ENCODE measurements at regions of chr12 and their contacts with region 1.

Region 1: GRCh38 chr12:111396726-111397445 is 8.8 kb upstream of the SH2B3 start:
- DNase-seq: no peak
- ATAC-seq: peak; percentile 86
- H3K4me3 ChIP-seq: peak overlapping the region; percentile 7; the same call in 1 of the 2 replicates
- H3K27ac ChIP-seq: peak overlapping the region; percentile 61
- H3K4me1 ChIP-seq: peaks cover 38% of the 10 kb centered on the region
- H3K27me3 ChIP-seq: no peaks in the 10 kb centered on the region
- CTCF ChIP-seq: peak; percentile 97 to 99 (median 99)
- EP300 ChIP-seq: no peak
- POLR2A ChIP-seq: no peak
- RAD21 ChIP-seq: peak; percentile 92

Region 2: GRCh38 chr12:111320233-111321050 is 76.4 kb before region 1 on chr12:
- CTCF ChIA-PET with region 1: no interaction called
- POLR2A ChIA-PET with region 1: no interaction called
- RAD21 ChIA-PET with region 1: no interaction called
- SMC1A ChIA-PET with region 1: no interaction called
- in situ Hi-C with region 1: no loop called
- intact Hi-C with region 1: no loop called
- DNase-seq: no peak
- ATAC-seq: no peak
- H3K4me3 ChIP-seq: no peak overlapping the region
- H3K27ac ChIP-seq: no peak overlapping the region
- H3K4me1 ChIP-seq: no peaks in the 10 kb centered on the region
- H3K27me3 ChIP-seq: no peaks in the 10 kb centered on the region
- CTCF ChIP-seq: no peak
- EP300 ChIP-seq: no peak
- POLR2A ChIP-seq: no peak
- RAD21 ChIP-seq: no peak

Region 3: GRCh38 chr12:111330800-111331752 is 65.8 kb before region 1 on chr12:
- CTCF ChIA-PET with region 1: interaction called, 9 read pairs
- POLR2A ChIA-PET with region 1: no interaction called
- RAD21 ChIA-PET with region 1: interaction called, 4 read pairs
- SMC1A ChIA-PET with region 1: interaction called, 7 read pairs
- in situ Hi-C with region 1: no loop called
- intact Hi-C with region 1: loop called (anchors 2 kb)
- DNase-seq: no peak
- ATAC-seq: peak; percentile 69
- H3K4me3 ChIP-seq: no peak overlapping the region
- H3K27ac ChIP-seq: no peak overlapping the region
- H3K4me1 ChIP-seq: no peaks in the 10 kb centered on the region
- H3K27me3 ChIP-seq: no peaks in the 10 kb centered on the region; a peak in 2 of 4 replicates
- CTCF ChIP-seq: peak; percentile 50 to 62 (median 53)
- EP300 ChIP-seq: no peak
- POLR2A ChIP-seq: no peak
- RAD21 ChIP-seq: peak; percentile 54

Region 4: GRCh38 chr12:111444925-111445725 is 48.2 kb after region 1 on chr12:
- CTCF ChIA-PET with region 1: interaction called, 1,117 read pairs
- POLR2A ChIA-PET with region 1: interaction called, 22 read pairs
- RAD21 ChIA-PET with region 1: interaction called, 804 read pairs
- SMC1A ChIA-PET with region 1: interaction called, 605 read pairs
- in situ Hi-C with region 1: loop called (anchors 5 kb)
- intact Hi-C with region 1: loop called (anchors 1 kb)
- DNase-seq: peak; percentile 94
- ATAC-seq: peak; percentile 91
- H3K4me3 ChIP-seq: peak overlapping the region; percentile 59; the same call in 1 of the 2 replicates
- H3K27ac ChIP-seq: peak overlapping the region; percentile 95
- H3K4me1 ChIP-seq: peaks cover 88% of the 10 kb centered on the region
- H3K27me3 ChIP-seq: no peaks in the 10 kb centered on the region
- CTCF ChIP-seq: peak in 1 of 3 experiments; percentile 5; a peak in 1 of 6 replicates
- EP300 ChIP-seq: peak; percentile 92 to 94
- POLR2A ChIP-seq: peak; percentile 74
- RAD21 ChIP-seq: peak; percentile 13; the same call in 1 of the 2 replicates

Region 5: GRCh38 chr12:111482462-111482861 is 85.6 kb after region 1 on chr12:
- CTCF ChIA-PET with region 1: interaction called, 36 read pairs
- POLR2A ChIA-PET with region 1: no interaction called
- RAD21 ChIA-PET with region 1: interaction called, 5 read pairs
- SMC1A ChIA-PET with region 1: interaction called, 7 read pairs
- in situ Hi-C with region 1: no loop called
- intact Hi-C with region 1: loop called (anchors 1 kb)
- DNase-seq: no peak
- ATAC-seq: no peak
- H3K4me3 ChIP-seq: no peak overlapping the region
- H3K27ac ChIP-seq: no peak overlapping the region
- H3K4me1 ChIP-seq: no peaks in the 10 kb centered on the region
- H3K27me3 ChIP-seq: no peaks in the 10 kb centered on the region
- CTCF ChIP-seq: peak; percentile 19 to 35 (median 29); a peak in 2 of 6 replicates
- EP300 ChIP-seq: no peak
- POLR2A ChIP-seq: no peak
- RAD21 ChIP-seq: peak; percentile 34

Region 6: DNA sequence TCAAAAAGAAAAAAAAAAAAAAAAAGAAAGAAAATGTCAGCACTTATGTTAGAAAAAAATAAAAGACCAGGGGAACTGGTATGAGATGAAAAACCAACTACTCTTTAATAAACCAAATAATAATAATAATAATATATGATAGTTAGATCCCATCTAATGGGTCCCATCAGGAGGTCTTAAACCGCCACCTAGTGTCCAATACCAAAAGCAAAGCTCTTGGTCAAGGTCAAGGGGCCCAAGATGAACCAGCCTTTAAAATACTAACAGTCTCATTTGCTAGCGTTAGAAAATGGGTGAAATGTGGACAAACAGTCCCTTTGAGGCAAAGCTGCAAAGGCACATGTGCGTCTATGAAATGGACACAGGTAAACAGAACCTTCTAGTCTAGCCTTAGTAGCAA is 276.6 kb after region 1 on chr12:
- CTCF ChIA-PET with region 1: interaction called, 6 read pairs
- POLR2A ChIA-PET with region 1: no interaction called
- RAD21 ChIA-PET with region 1: interaction called, 13 read pairs
- SMC1A ChIA-PET with region 1: interaction called, 3 read pairs
- in situ Hi-C with region 1: no loop called
- intact Hi-C with region 1: no loop called
- DNase-seq: no peak
- ATAC-seq: peak; percentile 52; the same call in 1 of the 3 replicates
- H3K4me3 ChIP-seq: no peak overlapping the region
- H3K27ac ChIP-seq: no peak overlapping the region
- H3K4me1 ChIP-seq: no peaks in the 10 kb centered on the region
- H3K27me3 ChIP-seq: no peaks in the 10 kb centered on the region
- CTCF ChIP-seq: peak; percentile 27 to 51 (median 40); a peak in 4 of 6 replicates
- EP300 ChIP-seq: no peak
- POLR2A ChIP-seq: no peak
- RAD21 ChIP-seq: peak; percentile 67

Region 7: DNA sequence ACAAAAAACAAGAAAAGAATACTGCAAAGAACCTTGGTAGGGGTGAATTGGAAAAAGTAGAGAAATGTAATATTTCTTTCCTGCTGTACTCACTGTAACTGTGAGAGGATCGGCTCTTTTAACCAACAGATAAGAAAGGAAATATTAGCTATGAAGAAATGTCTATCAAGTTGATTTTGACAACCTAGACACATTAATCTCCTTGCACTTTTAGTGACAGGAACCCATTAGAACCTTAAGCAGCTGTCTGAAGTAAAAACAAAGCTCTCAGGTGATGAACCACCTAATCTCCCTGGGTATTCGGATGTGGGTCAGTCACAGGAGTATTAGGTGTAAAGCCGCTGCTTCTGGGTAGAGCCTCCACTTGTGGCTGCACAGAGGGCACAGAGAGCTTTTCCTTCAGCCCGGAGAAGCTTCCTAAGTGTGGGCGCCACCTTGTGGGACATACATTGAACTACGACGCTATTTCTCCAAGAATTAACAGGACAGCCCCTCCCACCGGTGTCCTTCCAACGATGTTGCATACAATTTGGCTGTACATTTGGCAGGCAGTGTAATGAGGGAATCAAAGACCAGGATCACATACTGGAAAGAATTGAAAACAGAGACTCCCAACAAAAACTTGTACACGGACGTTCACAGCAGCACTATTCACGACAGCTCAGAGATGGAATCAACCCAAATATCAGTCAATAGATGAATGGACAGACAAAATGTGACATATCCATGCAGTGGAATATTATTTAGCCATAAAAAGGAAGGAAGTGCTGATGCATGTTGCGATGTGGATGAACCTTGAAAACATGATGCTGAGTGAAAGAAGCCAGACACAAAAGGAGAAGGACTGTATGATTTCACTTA is 416.2 kb after region 1 on chr12:
- CTCF ChIA-PET with region 1: interaction called, 14 read pairs
- POLR2A ChIA-PET with region 1: no interaction called
- RAD21 ChIA-PET with region 1: interaction called, 3 read pairs
- SMC1A ChIA-PET with region 1: interaction called, 5 read pairs
- in situ Hi-C with region 1: no loop called
- intact Hi-C with region 1: loop called (anchors 2 kb)
- DNase-seq: peak; percentile 44
- ATAC-seq: peak; percentile 99
- H3K4me3 ChIP-seq: no peak overlapping the region
- H3K27ac ChIP-seq: no peak overlapping the region
- H3K4me1 ChIP-seq: peaks cover 3% of the 10 kb centered on the region; the same call in 1 of the 2 replicates
- H3K27me3 ChIP-seq: no peaks in the 10 kb centered on the region
- CTCF ChIP-seq: peak; percentile 80 to 89 (median 80)
- EP300 ChIP-seq: no peak
- POLR2A ChIP-seq: no peak
- RAD21 ChIP-seq: peak; percentile 83